ENCODE measurements at regions of chr11 and their contacts with region 1.

Region 1: DNA sequence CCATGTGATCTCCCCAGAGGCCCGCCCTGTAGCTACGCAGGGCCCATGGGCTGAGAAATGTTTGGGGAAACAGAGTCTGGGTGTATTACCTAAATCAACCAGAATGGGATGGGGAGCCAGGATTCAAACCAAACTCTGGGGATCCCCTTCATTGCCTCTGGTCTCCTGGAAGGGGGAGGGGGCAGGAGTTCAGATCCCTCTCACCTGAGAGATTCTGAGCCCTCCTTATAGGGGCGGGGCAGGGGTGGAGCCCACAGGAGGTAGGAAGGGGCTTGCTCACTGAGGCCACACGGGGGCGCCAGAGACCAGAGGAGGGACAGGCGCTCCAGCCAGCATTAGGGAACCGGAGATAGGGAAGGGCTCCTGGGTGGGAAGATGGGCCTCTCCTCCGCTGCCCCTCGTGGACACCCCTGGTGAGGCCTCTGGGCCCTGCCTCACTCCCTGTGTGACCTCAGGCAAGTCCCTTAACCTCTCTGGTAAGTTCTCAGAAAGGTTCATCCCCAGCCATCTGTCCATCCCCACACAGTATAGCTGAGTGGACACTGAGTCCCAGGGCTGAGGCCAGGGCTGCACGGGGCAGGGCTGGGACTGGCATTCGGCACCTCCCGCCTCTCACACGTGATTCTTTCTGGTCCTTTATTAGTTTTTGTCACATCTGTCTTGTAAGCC is 2.7 kb upstream of the CDC42BPG start:
- DNase-seq: peak; percentile 88
- H3K4me3 ChIP-seq: no peak overlapping the region
- H3K27ac ChIP-seq: peak overlapping the region; percentile 92
- H3K4me1 ChIP-seq: peaks cover 73% of the 10 kb centered on the region
- CTCF ChIP-seq: peak; percentile 93

Region 2: GRCh38 chr11:64787526-64788320 is 59.4 kb before region 1 on chr11:
- CTCF ChIA-PET with region 1: no interaction called
- POLR2A ChIA-PET with region 1: interaction called, 3 read pairs
- intact Hi-C with region 1: loop called (anchors 2 kb)
- DNase-seq: peak; percentile 63
- H3K4me3 ChIP-seq: no peak overlapping the region
- H3K27ac ChIP-seq: peak overlapping the region; percentile 6
- H3K4me1 ChIP-seq: peaks cover 14% of the 10 kb centered on the region
- CTCF ChIP-seq: peak; percentile 98

Region 3: GRCh38 chr11:64864473-64865285 is 17.5 kb after region 1 on chr11:
- CTCF ChIA-PET with region 1: interaction called, 24 read pairs
- POLR2A ChIA-PET with region 1: interaction called, 178 read pairs
- intact Hi-C with region 1: loop called (anchors 1 kb)
- DNase-seq: peak; percentile 75
- H3K4me3 ChIP-seq: peak overlapping the region; percentile 59
- H3K27ac ChIP-seq: peak overlapping the region; percentile 97
- H3K4me1 ChIP-seq: peaks cover 100% of the 10 kb centered on the region
- CTCF ChIP-seq: 0 out of 2 replicates have a peak, but pooled peaks have one; percentile 6

Region 4: GRCh38 chr11:64887757-64888405 is 40.7 kb after region 1 on chr11:
- CTCF ChIA-PET with region 1: interaction called, 12 read pairs
- POLR2A ChIA-PET with region 1: interaction called, 9 read pairs
- intact Hi-C with region 1: loop called (anchors 1 kb)
- DNase-seq: peak; percentile 86
- H3K4me3 ChIP-seq: peak overlapping the region; percentile 53
- H3K27ac ChIP-seq: peak overlapping the region; percentile 44
- H3K4me1 ChIP-seq: peaks cover 40% of the 10 kb centered on the region
- CTCF ChIP-seq: peak; percentile 93

Region 5: DNA sequence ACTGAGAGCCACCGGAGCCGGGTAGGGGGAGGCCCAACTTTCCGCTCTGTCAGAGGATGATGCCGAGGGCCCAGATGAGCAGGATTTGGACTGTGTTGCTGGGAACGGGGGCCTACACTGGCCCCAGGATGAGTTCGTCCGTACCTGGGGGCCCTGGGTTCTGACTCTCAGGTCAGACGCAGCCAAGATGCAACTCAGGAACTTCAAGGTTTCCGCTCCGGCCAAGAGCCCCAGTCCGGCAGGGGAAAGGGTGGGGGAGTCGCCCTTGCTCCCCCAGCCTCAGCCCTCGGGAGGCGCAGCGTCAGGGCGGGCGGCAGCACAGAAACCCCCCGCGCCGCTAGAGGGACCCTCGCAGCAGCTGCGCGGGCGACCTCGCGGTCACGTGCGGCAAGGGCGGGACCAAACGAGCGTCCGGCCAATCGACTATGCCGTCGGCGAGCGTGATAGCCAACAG is 166.6 kb after region 1 on chr11:
- CTCF ChIA-PET with region 1: interaction called, 4 read pairs
- POLR2A ChIA-PET with region 1: interaction called, 5 read pairs
- intact Hi-C with region 1: loop called (anchors 1 kb)
- DNase-seq: peak; percentile 98
- H3K4me3 ChIP-seq: peak overlapping the region; percentile 83
- H3K27ac ChIP-seq: peak overlapping the region; percentile 92
- H3K4me1 ChIP-seq: peaks cover 26% of the 10 kb centered on the region
- CTCF ChIP-seq: peak; percentile 71

Region 6: DNA sequence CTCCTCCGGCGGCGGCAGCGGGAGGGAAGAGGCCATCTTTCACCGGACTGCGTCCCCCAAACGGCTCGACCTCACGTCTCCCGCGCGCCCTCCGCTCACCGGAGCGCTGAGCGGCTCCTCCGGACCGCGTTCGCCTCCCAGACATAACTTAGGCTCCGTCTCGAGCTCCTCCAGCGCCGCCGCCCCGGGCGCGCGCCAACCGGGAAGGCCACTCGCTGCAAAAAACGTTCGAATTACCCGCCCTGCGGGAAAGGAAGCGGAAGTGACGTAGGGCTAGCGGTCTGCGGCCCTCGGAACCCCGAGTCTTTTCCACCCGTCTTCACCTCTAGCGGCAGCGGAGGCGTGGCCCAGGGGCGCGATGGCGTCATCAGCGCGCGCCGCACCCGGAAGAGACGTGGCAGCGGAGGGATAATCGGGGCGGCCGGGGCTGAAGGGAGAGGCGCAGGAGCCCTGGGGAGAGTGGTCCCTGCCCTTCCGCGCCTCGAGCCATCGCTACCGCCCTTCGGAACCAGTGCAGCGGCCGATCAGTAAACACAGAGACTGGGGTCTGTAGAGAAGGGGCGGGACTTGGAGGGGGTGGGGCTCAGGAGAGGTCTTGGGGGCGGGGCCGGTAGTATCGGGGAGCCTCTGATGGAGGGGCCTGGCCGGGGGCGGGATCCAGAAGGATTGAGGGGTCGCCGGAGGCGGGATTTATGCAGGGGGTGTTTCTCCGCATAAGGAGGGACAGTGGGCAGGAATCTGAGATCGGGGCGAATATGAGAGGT is 236.9 kb after region 1 on chr11 and contains the starts of genes CDCA5 and ZFPL1:
- CTCF ChIA-PET with region 1: no interaction called
- POLR2A ChIA-PET with region 1: interaction called, 4 read pairs
- intact Hi-C with region 1: loop called (anchors 10 kb)
- DNase-seq: peak; percentile 97
- H3K4me3 ChIP-seq: peak within 1 kb of the TSS; percentile 91
- H3K27ac ChIP-seq: peak within 1 kb of the TSS; percentile 74
- H3K4me1 ChIP-seq: peaks cover 49% of the 10 kb centered on the region
- CTCF ChIP-seq: no peak
- total RNA-seq, gene CDCA5: 119 and 135 TPM in 2 replicates
- total RNA-seq, gene ZFPL1: 39.5 and 43.9 TPM in 2 replicates

Region 7: GRCh38 chr11:65180877-65181568 is 333.9 kb after region 1 on chr11:
- CTCF ChIA-PET with region 1: no interaction called
- POLR2A ChIA-PET with region 1: no interaction called
- intact Hi-C with region 1: loop called (anchors 2 kb)
- DNase-seq: peak; percentile 83
- H3K4me3 ChIP-seq: peak overlapping the region; percentile 91
- H3K27ac ChIP-seq: peak overlapping the region; percentile 64
- H3K4me1 ChIP-seq: peaks cover 26% of the 10 kb centered on the region
- CTCF ChIP-seq: peak; percentile 89

Measured in OCI-LY7 (cell line).